Naive thymus-derived CD4-positive, alpha-beta T cell (primary cell): ENCODE measurements at regions of chr6 and their contacts with region 1.

Region 1: DNA sequence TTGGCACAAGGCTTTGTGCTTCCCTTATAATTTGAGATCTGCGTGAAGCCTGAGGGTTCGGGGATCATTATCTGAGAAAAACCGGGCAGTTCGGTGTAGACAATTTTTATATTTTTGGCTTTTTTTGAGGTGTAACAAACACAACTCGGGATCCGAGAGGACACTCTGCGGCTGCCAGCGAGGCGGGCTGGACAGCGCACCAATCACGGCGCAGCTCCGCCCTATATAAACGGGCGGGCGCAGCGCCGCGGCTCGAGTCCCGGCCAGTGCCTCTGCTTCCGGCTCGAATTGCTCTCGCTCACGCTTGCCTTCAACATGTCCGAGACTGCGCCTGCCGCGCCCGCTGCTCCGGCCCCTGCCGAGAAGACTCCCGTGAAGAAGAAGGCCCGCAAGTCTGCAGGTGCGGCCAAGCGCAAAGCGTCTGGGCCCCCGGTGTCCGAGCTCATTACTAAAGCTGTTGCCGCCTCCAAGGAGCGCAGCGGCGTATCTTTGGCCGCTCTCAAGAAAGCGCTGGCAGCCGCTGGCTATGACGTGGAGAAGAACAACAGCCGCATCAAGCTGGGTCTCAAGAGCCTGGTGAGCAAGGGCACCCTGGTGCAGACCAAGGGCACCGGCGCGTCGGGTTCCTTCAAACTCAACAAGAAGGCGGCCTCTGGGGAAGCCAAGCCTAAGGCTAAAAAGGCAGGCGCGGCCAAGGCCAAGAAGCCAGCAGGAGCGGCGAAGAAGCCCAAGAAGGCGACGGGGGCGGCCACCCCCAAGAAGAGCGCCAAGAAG is 69.0 kb downstream of the HFE start:
- DNase-seq: peak; percentile 80 to 92 (median 88)
- ATAC-seq: peak; percentile 61
- H3K4me3 ChIP-seq: peak overlapping the region; percentile 82
- H3K4me3 Mint-ChIP-seq: peak overlapping the region; percentile 96 to 100 (median 98)
- H3K27ac ChIP-seq: peak overlapping the region; percentile 92
- H3K27ac Mint-ChIP-seq: peak overlapping the region; percentile 95 to 99 (median 98)
- H3K4me1 ChIP-seq: peaks cover 19 to 23% of the 10 kb centered on the region in 2 donors
- H3K4me1 Mint-ChIP-seq: peaks cover 16 to 58% (median 30%) of the 10 kb centered on the region in 7 donors
- H3K27me3 ChIP-seq: no peaks in the 10 kb centered on the region
- H3K27me3 Mint-ChIP-seq: peaks cover 0 to 33% (median 0%) of the 10 kb centered on the region in 5 donors

Region 2: DNA sequence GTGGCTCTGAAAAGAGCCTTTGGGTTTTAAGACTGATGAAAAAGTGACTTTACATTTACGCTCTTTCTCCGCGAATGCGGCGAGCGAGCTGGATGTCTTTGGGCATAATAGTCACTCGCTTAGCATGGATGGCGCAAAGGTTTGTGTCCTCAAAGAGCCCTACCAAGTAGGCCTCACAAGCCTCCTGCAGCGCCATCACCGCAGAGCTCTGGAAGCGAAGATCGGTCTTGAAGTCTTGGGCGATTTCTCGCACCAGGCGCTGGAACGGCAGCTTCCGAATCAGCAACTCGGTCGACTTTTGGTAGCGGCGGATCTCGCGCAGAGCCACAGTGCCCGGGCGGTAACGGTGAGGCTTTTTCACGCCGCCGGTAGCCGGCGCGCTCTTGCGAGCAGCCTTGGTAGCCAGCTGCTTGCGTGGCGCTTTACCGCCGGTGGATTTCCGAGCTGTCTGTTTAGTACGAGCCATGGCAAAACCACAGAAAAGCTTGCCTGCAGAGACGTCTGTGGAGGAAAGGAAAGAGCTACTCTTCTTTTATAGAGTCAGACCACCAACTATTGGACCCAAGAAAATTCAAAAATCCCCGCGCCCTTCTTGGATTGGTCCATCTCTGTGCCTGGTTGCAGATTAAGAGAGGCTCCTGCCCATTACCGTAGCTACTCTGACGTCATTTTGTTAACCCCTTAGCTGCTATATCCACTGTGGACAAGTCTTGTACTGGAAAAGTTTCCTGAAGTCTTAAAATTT is 124.5 kb before region 1 on chr6:
- CTCF ChIA-PET with region 1: interaction called, 4 read pairs
- POLR2A ChIA-PET with region 1: interaction called, 409 read pairs
- intact Hi-C with region 1: loop called (anchors 1 kb)
- DNase-seq: peak; percentile 56 to 94 (median 90)
- ATAC-seq: peak; percentile 79
- H3K4me3 ChIP-seq: peak overlapping the region; percentile 70
- H3K4me3 Mint-ChIP-seq: peak overlapping the region; percentile 89 to 98 (median 96)
- H3K27ac ChIP-seq: peak overlapping the region; percentile 69
- H3K27ac Mint-ChIP-seq: peak overlapping the region; percentile 93 to 98 (median 96)
- H3K4me1 ChIP-seq: peaks cover 23 to 31% of the 10 kb centered on the region in 2 donors
- H3K4me1 Mint-ChIP-seq: peaks cover 14 to 69% (median 43%) of the 10 kb centered on the region in 7 donors
- H3K27me3 ChIP-seq: no peaks in the 10 kb centered on the region
- H3K27me3 Mint-ChIP-seq: peaks cover 0 to 7% (median 0%) of the 10 kb centered on the region in 5 donors

Region 3: DNA sequence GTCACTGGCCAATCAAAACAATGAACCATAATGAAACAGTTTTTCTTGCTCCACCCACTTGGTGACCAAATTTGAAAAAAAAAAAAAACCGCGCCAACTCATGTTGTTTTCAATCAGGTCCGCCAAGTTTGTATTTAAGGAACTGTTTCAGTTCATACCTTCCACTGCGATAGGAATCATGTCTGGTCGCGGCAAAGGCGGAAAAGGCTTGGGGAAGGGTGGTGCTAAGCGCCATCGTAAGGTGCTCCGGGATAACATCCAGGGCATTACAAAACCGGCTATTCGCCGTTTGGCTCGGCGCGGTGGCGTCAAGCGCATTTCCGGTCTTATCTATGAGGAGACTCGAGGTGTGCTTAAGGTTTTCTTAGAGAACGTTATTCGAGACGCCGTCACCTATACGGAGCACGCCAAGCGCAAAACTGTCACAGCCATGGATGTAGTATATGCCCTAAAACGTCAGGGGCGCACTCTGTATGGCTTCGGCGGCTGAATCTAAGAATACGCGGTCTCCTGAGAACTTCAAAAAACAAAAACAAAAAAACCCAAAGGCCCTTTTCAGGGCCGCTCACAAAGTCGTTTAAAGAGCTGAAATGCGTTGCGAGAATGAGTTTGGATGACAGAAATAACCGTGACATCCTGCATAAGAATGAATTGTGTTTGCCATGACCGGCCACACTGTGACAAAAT is 52.4 kb before region 1 on chr6:
- CTCF ChIA-PET with region 1: interaction called, 7 read pairs
- POLR2A ChIA-PET with region 1: interaction called, 172 read pairs
- intact Hi-C with region 1: loop called (anchors 1 kb)
- DNase-seq: peak; percentile 83 to 96 (median 95)
- ATAC-seq: peak; percentile 94
- H3K4me3 ChIP-seq: peak overlapping the region; percentile 40
- H3K4me3 Mint-ChIP-seq: peak overlapping the region; percentile 81 to 97 (median 89)
- H3K27ac ChIP-seq: peak overlapping the region; percentile 75
- H3K27ac Mint-ChIP-seq: peak overlapping the region; percentile 96 to 100 (median 98)
- H3K4me1 ChIP-seq: peaks cover 4 to 12% of the 10 kb centered on the region in 2 donors
- H3K4me1 Mint-ChIP-seq: peaks cover 7 to 25% (median 22%) of the 10 kb centered on the region in 7 donors
- H3K27me3 ChIP-seq: no peaks in the 10 kb centered on the region
- H3K27me3 Mint-ChIP-seq: peaks cover 0 to 3% (median 0%) of the 10 kb centered on the region in 5 donors

Region 4: DNA sequence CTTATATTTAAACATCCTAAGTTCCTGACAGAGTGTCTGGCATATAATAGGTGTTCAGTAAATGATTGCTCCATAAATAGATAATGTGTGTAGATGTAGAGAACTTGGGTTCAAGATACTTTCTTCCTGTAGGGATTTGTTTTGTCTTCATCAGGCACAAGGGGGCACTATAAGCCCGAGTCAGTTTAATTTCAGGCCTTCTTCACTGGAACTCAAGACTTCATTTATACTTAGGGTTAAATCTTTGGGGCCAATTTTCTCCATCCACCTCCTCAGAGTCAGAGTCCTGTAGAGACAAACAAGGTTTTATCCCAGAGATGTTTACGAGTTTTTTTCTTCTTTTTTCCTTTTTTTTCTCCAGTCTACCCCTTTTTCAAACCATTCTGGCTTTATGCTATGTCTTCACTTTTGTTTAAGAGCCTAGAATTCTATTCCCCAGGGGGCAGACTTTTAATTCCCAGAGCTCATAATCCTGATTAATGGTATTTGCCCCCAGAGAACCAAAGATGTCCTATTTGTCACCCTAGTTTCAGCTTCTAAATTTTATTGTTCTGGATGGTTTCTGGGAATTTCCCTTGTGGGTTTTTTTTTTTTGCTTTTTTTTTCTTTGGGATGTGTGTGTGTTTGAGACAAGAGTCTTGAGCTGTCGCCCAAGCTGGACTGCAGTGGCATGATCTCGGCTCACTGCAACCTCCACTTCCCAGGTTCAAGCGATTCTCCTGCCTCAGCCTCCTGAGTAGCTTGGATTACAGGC is 19.3 kb after region 1 on chr6:
- CTCF ChIA-PET with region 1: interaction called, 8 read pairs
- POLR2A ChIA-PET with region 1: interaction called, 743 read pairs
- intact Hi-C with region 1: loop called (anchors 1 kb)
- DNase-seq: peak in 7 of 9 donors; percentile 57 to 75 (median 66)
- ATAC-seq: peak; percentile 32
- H3K4me3 ChIP-seq: no peak overlapping the region
- H3K4me3 Mint-ChIP-seq: peak overlapping the region in 7 of 10 donors; percentile 15 to 63 (median 43)
- H3K27ac ChIP-seq: no peak overlapping the region
- H3K27ac Mint-ChIP-seq: peak overlapping the region; percentile 32 to 89 (median 76)
- H3K4me1 ChIP-seq: peaks cover 16 to 19% of the 10 kb centered on the region in 2 donors
- H3K4me1 Mint-ChIP-seq: peaks cover 20 to 51% (median 39%) of the 10 kb centered on the region in 7 donors
- H3K27me3 ChIP-seq: no peaks in the 10 kb centered on the region
- H3K27me3 Mint-ChIP-seq: no peaks in the 10 kb centered on the region

Region 5: DNA sequence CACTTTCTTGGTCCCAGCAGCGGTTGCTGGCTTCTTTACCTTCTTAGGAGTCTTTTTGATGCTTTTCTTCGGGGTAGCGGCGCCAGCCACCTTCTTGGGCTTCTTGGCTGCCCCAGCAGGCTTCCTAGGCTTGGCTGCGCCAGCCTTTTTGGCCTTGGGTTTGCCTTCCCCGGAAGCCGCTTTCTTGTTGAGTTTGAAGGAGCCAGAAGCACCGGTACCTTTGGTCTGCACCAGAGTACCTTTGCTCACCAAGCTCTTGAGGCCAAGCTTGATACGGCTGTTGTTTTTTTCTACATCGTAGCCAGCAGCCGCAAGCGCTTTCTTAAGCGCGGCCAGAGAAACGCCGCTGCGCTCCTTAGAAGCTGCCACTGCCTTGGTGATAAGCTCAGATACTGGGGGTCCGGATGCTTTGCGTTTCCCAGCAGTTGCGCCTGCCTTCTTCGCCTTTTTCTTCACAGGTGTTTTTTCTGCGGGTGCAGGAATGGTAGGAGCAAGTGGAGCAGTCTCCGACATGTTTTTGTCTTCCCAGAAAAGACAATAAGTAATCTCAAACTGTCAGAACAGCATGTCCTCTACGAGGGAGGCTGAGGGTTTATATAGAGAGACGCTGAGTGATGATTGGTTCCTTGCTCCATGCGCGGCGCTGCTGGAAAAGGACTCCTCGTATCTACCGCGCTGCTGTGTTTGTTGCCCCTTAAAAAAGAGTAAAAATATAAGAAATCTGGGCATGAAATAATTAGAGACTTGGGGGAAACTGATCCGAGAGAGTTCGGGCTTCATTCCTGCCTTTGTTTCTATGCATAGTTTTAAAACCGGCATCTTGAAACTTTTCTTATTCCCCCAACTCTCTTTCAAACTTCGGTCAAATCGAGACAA is 78.4 kb after region 1 on chr6:
- CTCF ChIA-PET with region 1: no interaction called
- POLR2A ChIA-PET with region 1: interaction called, 280 read pairs
- intact Hi-C with region 1: loop called (anchors 1 kb)
- DNase-seq: peak; percentile 48 to 94 (median 85)
- ATAC-seq: peak; percentile 80
- H3K4me3 ChIP-seq: peak overlapping the region; percentile 93
- H3K4me3 Mint-ChIP-seq: peak overlapping the region; percentile 87 to 99 (median 94)
- H3K27ac ChIP-seq: peak overlapping the region; percentile 87
- H3K27ac Mint-ChIP-seq: peak overlapping the region; percentile 93 to 100 (median 98)
- H3K4me1 ChIP-seq: peaks cover under 1 to 18% of the 10 kb centered on the region in 2 donors
- H3K4me1 Mint-ChIP-seq: peaks cover 18 to 52% (median 38%) of the 10 kb centered on the region in 7 donors
- H3K27me3 ChIP-seq: no peaks in the 10 kb centered on the region
- H3K27me3 Mint-ChIP-seq: peaks cover 0 to 15% (median 0%) of the 10 kb centered on the region in 5 donors

Region 6: DNA sequence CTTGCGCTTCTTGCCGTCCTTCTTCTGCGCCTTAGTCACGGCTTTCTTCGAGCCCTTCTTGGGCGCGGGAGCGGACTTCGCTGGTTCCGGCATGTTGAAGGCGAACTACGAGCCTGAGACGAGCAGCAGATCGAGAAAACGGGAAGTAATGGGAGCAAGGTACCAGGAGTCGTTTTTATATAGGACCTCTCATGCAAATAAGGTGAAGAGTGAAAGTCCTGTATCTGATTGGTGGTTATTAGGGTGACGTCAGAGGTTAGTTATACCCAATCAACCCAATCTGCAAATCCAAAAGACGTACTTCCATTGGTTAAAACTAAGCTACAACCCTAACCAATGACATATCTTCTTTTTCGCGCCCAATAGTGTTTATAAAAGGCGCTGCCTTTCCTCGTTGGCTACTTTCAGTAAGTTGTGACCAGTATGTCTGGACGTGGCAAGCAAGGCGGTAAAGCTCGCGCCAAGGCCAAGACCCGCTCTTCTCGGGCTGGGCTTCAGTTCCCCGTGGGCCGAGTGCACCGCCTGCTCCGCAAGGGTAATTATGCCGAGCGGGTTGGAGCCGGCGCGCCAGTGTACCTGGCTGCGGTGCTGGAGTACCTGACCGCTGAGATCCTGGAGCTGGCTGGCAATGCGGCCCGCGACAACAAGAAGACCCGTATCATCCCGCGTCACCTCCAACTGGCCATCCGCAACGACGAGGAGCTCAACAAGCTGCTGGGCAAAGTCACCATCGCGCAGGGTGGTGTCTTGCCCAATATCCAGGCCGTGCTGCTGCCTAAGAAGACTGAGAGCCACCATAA is 990.6 kb after region 1 on chr6:
- CTCF ChIA-PET with region 1: no interaction called
- POLR2A ChIA-PET with region 1: interaction called, 66 read pairs
- intact Hi-C with region 1: loop called (anchors 1 to 2 kb)
- DNase-seq: peak; percentile 71 to 96 (median 92)
- ATAC-seq: peak; percentile 92
- H3K4me3 ChIP-seq: peak overlapping the region; percentile 90
- H3K4me3 Mint-ChIP-seq: no peak overlapping the region
- H3K27ac ChIP-seq: peak overlapping the region; percentile 89
- H3K27ac Mint-ChIP-seq: no peak overlapping the region
- H3K4me1 ChIP-seq: peaks cover 6 to 7% of the 10 kb centered on the region in 2 donors
- H3K4me1 Mint-ChIP-seq: peaks cover 0 to 26% (median 14%) of the 10 kb centered on the region in 7 donors
- H3K27me3 ChIP-seq: no peaks in the 10 kb centered on the region
- H3K27me3 Mint-ChIP-seq: no peaks in the 10 kb centered on the region

Region 7: DNA sequence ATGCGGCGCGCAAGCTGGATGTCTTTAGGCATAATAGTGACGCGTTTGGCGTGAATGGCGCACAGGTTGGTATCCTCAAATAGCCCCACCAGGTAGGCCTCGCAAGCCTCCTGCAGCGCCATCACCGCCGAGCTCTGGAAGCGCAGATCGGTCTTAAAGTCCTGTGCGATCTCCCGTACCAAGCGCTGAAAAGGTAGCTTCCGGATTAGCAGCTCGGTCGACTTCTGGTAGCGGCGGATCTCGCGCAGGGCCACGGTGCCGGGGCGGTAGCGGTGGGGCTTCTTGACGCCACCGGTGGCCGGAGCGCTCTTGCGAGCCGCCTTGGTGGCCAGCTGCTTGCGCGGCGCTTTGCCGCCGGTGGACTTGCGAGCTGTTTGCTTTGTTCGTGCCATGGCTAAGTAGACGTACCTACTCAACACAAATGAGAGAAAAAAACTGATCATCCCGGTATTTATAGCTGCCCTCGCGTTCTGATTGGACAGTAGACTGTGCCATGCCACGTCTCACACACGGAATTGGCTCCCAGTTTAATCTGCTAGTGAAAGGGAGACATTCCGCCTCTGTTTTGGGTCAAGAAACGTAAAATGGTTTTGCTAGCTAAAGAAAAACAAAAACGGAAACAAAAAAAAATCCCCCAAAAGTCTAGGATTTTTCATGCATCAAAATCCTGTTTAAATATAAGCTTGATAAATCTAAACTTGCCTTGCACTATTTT is 1715.8 kb after region 1 on chr6:
- CTCF ChIA-PET with region 1: no interaction called
- POLR2A ChIA-PET with region 1: interaction called, 82 read pairs
- intact Hi-C with region 1: loop called in 1 of 2 experiments (anchors 2 kb)
- DNase-seq: peak; percentile 68 to 97 (median 94)
- ATAC-seq: peak; percentile 88
- H3K4me3 ChIP-seq: peak overlapping the region; percentile 69
- H3K4me3 Mint-ChIP-seq: peak overlapping the region; percentile 83 to 99 (median 94)
- H3K27ac ChIP-seq: peak overlapping the region; percentile 84
- H3K27ac Mint-ChIP-seq: peak overlapping the region; percentile 95 to 98 (median 97)
- H3K4me1 ChIP-seq: peaks cover under 1 to 19% of the 10 kb centered on the region in 2 donors
- H3K4me1 Mint-ChIP-seq: peaks cover 15 to 69% (median 42%) of the 10 kb centered on the region in 7 donors
- H3K27me3 ChIP-seq: no peaks in the 10 kb centered on the region
- H3K27me3 Mint-ChIP-seq: peaks cover 0 to 8% (median 0%) of the 10 kb centered on the region in 5 donors